Aorta (tissue), 5 donors: ENCODE measurements at regions of chr13 and their contacts with region 1.

Region 1: GRCh38 chr13:49996951-49997895 is at the start of gene TRIM13:
- DNase-seq: peak; percentile 94 to 95
- ATAC-seq: peak; percentile 94
- H3K4me3 ChIP-seq: peak within 1 kb of the TSS; percentile 81 to 98
- H3K27ac ChIP-seq: peak within 1 kb of the TSS; percentile 80 to 94
- H3K4me1 ChIP-seq: peaks cover 7% of the 10 kb centered on the region in 2 donors
- H3K27me3 ChIP-seq: no peaks in the 10 kb centered on the region
- total RNA-seq, gene TRIM13: 25.0 to 27.6 TPM

Region 2: GRCh38 chr13:49810567-49811526 is 186.4 kb before region 1 on chr13:
- intact Hi-C with region 1: no loop called
- DNase-seq: no peak
- ATAC-seq: no peak
- H3K4me3 ChIP-seq: no peak overlapping the region
- H3K27ac ChIP-seq: no peak overlapping the region
- H3K4me1 ChIP-seq: no peaks in the 10 kb centered on the region
- H3K27me3 ChIP-seq: no peaks in the 10 kb centered on the region

Region 3: GRCh38 chr13:49864509-49864908 is 132.7 kb before region 1 on chr13:
- intact Hi-C with region 1: no loop called
- DNase-seq: no peak
- ATAC-seq: no peak
- H3K4me3 ChIP-seq: no peak overlapping the region
- H3K27ac ChIP-seq: no peak overlapping the region
- H3K4me1 ChIP-seq: no peaks in the 10 kb centered on the region
- H3K27me3 ChIP-seq: no peaks in the 10 kb centered on the region

Region 4: GRCh38 chr13:50071379-50071778 is 74.2 kb after region 1 on chr13:
- intact Hi-C with region 1: loop called in 1 of 2 experiments (anchors 2 kb)
- DNase-seq: no peak
- ATAC-seq: no peak
- H3K4me3 ChIP-seq: peak overlapping the region; percentile 67 to 69
- H3K27ac ChIP-seq: peak overlapping the region; percentile 74 to 82
- H3K4me1 ChIP-seq: peaks cover 0 to 2% of the 10 kb centered on the region in 2 donors
- H3K27me3 ChIP-seq: no peaks in the 10 kb centered on the region

Region 5: GRCh38 chr13:50123862-50124536 is 126.8 kb after region 1 on chr13:
- intact Hi-C with region 1: loop called in 1 of 2 experiments (anchors 1 kb)
- DNase-seq: peak; percentile 93 to 99
- ATAC-seq: peak; percentile 92
- H3K4me3 ChIP-seq: peak overlapping the region; percentile 48 to 65
- H3K27ac ChIP-seq: peak overlapping the region; percentile 94 to 99
- H3K4me1 ChIP-seq: no peaks in the 10 kb centered on the region
- H3K27me3 ChIP-seq: no peaks in the 10 kb centered on the region

Region 6: DNA sequence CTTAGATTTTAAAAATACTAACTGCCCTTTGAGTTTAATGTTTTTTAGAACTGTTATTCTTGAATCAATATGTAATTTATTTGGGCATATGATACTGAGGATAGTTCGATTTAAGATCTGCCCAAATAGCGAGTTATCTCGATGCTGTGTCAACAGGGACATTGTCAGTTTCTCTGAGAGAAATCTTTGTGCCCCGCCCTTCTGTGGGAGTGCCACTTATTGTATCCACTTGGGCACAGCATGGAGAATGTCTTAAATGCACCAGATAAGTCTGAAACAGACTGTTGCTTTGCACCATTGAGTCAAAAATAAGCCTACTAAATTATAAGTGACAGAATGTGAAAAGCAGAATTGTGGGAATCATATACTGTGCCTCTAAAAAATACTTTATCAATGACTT is 958.0 kb after region 1 on chr13:
- intact Hi-C with region 1: no loop called
- DNase-seq: no peak
- ATAC-seq: no peak
- H3K4me3 ChIP-seq: no peak overlapping the region
- H3K27ac ChIP-seq: no peak overlapping the region
- H3K4me1 ChIP-seq: peaks cover 0 to 5% of the 10 kb centered on the region in 2 donors
- H3K27me3 ChIP-seq: no peaks in the 10 kb centered on the region